ENCODE measurements at regions of chr18 and their contacts with region 1.

Region 1: GRCh38 chr18:43587538-43588153 is 310.4 kb upstream of the SYT4 start:
- DNase-seq: no peak
- ATAC-seq: peak in 1 of 2 donors; percentile 21
- H3K4me3 ChIP-seq: no peak overlapping the region
- H3K27ac ChIP-seq: no peak overlapping the region
- H3K4me1 ChIP-seq: peaks cover 0 to 3% of the 10 kb centered on the region in 2 donors
- H3K27me3 ChIP-seq: no peaks in the 10 kb centered on the region
- CTCF ChIP-seq: peak; percentile 33 to 68 (median 49)
- POLR2A ChIP-seq: no peak

Region 2: GRCh38 chr18:42114310-42114943 is 1473.2 kb before region 1 on chr18:
- in situ Hi-C with region 1: loop called in 3 of 4 experiments (anchors 25 kb)
- intact Hi-C with region 1: loop called (anchors 5 kb)
- DNase-seq: peak; percentile 11 to 30
- ATAC-seq: peak; percentile 77 to 79
- H3K4me3 ChIP-seq: peak overlapping the region in 2 of 4 donors; percentile 18 to 39
- H3K27ac ChIP-seq: no peak overlapping the region
- H3K4me1 ChIP-seq: peaks cover 0 to 8% of the 10 kb centered on the region in 2 donors
- H3K27me3 ChIP-seq: no peaks in the 10 kb centered on the region
- CTCF ChIP-seq: peak; percentile 50 to 87 (median 65)
- POLR2A ChIP-seq: no peak

Region 3: DNA sequence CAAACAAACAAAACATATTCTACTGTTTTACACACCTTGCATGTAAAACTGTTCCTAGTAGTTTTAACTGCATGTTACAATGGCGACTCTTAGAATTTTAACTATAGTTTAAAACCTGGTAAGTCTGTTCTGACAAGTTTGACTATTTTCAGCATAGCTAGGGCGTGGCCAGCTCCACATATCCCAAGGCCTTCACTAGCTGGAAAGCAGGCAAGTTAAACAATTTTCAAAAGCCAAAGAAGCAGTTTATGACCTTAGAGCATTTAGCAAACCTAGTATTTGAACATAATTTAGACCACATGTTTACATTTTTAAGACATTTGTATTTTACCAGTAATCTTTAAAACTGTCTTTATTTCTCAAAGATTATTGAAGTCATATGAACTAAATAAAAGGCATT is 92.5 kb after region 1 on chr18:
- in situ Hi-C with region 1: no loop called
- intact Hi-C with region 1: no loop called
- DNase-seq: no peak
- ATAC-seq: no peak
- H3K4me3 ChIP-seq: no peak overlapping the region
- H3K27ac ChIP-seq: no peak overlapping the region
- H3K4me1 ChIP-seq: no peaks in the 10 kb centered on the region
- H3K27me3 ChIP-seq: no peaks in the 10 kb centered on the region
- CTCF ChIP-seq: no peak
- POLR2A ChIP-seq: no peak